ENCODE measurements at regions of chr9 and their contacts with region 1.

Region 1: DNA sequence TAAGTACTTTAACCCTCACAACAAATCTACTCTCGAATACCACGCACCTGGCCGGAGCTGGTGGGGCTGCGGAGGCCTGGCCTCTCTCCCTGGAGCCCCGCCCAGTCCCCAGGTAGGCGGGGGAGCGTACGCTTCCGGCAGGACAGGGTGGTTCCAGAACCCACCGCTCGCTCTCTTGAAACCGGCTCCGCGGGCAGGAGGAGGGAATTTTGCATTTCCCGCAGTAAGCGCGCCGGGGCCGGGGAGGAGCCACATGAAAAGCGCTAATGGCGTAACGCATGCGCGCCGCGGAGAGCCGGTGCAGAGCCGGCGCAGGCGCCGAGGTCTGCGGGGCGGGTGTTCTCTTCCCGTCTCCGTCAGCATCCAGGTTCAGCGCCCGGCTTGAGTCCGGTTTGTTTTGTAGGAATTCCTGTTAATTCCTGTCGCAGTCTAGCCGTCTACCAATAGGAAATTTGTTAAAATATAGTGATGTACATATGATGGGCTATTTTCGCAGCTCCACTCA is 20.8 kb downstream of the CAVIN4 start:
- DNase-seq: peak; percentile 94
- H3K4me3 Mint-ChIP-seq: peak overlapping the region; percentile 78
- H3K27ac Mint-ChIP-seq: peak overlapping the region; percentile 13
- H3K4me1 Mint-ChIP-seq: peaks cover 11% of the 10 kb centered on the region
- H3K27me3 Mint-ChIP-seq: peaks cover 20% of the 10 kb centered on the region

Region 2: DNA sequence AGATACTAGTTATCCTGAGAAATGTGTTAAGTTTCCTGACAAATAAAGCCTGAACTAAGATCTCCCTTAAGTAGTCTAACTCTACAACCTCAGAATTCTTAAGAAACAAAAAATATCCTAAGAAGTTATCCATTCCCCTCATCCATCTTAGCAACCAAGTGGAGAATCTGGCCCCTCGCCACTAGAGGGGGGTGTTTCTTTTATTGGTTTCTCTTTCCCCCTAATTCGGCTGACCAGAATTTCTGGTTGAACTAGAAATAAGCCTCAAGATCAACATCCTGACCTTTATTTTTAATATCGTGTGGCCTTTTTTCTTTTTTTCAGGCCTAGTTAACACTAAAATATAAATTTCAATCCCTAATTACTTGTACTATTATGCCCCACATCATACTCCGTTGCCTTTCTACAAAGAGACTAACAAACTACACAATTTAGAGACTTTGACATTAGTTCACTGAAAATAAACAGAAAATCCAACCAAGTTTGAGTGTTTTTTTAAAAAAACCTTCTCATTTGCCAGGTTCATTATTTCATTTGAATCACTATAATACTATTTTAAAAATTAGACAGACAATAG is 791.3 kb before region 1 on chr9:
- intact Hi-C with region 1: loop called (anchors 10 kb)
- DNase-seq: peak; percentile 89
- H3K4me3 Mint-ChIP-seq: no peak overlapping the region
- H3K27ac Mint-ChIP-seq: no peak overlapping the region
- H3K4me1 Mint-ChIP-seq: peaks cover 23% of the 10 kb centered on the region
- H3K27me3 Mint-ChIP-seq: peaks cover 22% of the 10 kb centered on the region

Region 3: DNA sequence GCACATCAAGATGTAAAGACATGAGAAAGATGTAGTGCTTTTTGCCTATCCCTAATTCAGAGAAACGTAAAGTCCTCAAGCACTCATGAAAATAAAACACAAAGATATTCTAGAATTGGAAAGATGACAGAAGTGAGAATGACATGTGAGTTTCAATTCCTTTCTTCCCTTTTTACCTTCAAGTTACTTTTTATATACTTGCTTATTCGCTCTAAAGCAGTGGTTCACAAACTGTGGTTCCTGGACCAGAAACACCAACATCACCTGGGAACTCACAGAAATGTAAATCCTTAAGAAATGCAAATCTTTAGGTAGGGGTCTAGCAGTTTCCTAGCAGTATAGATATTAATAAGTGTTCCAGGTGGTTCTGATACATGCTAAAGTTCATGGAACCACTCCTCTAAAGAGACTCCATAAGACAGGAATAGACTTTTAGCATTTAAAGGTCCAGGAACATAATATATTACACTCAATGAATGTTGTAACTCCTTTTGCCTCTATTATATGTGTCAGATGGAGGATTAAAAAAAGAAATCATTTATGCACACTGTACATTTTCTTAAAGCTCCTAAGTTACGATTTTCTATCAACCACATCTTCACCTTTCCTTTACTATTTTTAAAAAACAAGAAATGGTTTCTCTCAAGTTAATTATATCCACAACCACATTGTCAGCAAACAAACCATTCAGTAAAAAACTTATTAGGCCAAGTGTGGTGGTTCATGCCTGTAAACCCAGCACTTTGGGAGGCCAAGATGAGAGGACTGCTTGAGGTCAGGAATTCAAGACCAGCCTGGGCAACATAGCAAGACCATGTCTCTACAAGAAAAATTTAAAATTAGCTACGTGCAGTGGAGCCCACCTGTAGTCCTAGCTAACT is 539.8 kb before region 1 on chr9:
- intact Hi-C with region 1: no loop called
- DNase-seq: no peak
- H3K4me3 Mint-ChIP-seq: no peak overlapping the region
- H3K27ac Mint-ChIP-seq: no peak overlapping the region
- H3K4me1 Mint-ChIP-seq: peaks cover 1% of the 10 kb centered on the region
- H3K27me3 Mint-ChIP-seq: no peaks in the 10 kb centered on the region

Region 4: GRCh38 chr9:100322954-100323536 is 275.6 kb before region 1 on chr9:
- intact Hi-C with region 1: loop called (anchors 5 kb)
- DNase-seq: peak; percentile 67
- H3K4me3 Mint-ChIP-seq: no peak overlapping the region
- H3K27ac Mint-ChIP-seq: no peak overlapping the region
- H3K4me1 Mint-ChIP-seq: peaks cover 2% of the 10 kb centered on the region
- H3K27me3 Mint-ChIP-seq: no peaks in the 10 kb centered on the region

Region 5: DNA sequence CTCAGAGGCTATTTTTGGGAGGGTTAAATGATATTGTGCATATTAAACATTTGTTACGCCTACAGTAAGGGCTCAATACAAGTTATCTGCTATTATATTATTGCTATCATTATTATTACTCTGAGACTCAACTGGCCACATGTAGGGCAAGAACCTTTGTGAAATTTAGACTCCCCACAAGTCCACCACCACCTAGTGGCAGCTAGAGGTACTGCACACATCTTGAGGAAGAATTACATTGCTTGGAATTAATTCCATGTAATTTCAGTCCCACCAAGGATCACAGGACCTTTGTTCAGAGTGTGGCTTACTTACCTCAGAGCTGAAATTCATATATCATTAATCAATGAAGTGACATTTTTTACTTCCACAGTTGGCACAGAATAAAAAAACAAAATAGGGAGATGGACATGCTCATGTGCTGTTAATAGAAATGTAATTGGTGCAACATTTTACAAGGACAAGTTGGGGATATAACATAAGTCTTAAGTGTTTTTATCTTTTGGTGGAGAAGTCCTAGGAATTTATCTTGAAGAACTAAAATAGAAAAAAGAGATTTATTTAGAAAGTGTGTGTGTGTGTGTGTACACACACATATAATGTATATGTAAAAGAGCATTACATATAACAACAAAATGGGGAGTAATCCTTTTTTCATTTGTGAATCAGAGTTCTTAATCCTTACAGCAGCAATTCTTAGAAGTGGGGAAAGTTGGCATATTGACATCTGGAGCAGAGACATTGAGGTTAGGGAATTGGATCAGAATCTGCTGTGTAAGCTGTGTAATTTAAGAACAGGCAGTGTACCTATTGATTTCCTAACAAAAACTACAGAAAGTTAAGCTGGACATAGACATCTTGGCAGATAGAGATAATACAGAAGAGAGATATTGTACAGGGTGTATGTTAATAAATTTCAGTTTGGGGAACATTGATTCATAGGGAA is 160.6 kb before region 1 on chr9:
- intact Hi-C with region 1: loop called (anchors 5 kb)
- DNase-seq: peak; percentile 90
- H3K4me3 Mint-ChIP-seq: no peak overlapping the region
- H3K27ac Mint-ChIP-seq: no peak overlapping the region
- H3K4me1 Mint-ChIP-seq: peaks cover 2% of the 10 kb centered on the region
- H3K27me3 Mint-ChIP-seq: no peaks in the 10 kb centered on the region

Region 6: GRCh38 chr9:100641166-100641565 is 42.5 kb after region 1 on chr9:
- intact Hi-C with region 1: no loop called
- DNase-seq: no peak
- H3K4me3 Mint-ChIP-seq: no peak overlapping the region
- H3K27ac Mint-ChIP-seq: no peak overlapping the region
- H3K4me1 Mint-ChIP-seq: no peaks in the 10 kb centered on the region
- H3K27me3 Mint-ChIP-seq: no peaks in the 10 kb centered on the region

Region 7: GRCh38 chr9:100794738-100795269 is 196.1 kb after region 1 on chr9:
- intact Hi-C with region 1: no loop called
- DNase-seq: no peak
- H3K4me3 Mint-ChIP-seq: no peak overlapping the region
- H3K27ac Mint-ChIP-seq: no peak overlapping the region
- H3K4me1 Mint-ChIP-seq: no peaks in the 10 kb centered on the region
- H3K27me3 Mint-ChIP-seq: no peaks in the 10 kb centered on the region

Region 8: GRCh38 chr9:100856238-100856637 is 257.5 kb after region 1 on chr9:
- intact Hi-C with region 1: no loop called
- DNase-seq: no peak
- H3K4me3 Mint-ChIP-seq: no peak overlapping the region
- H3K27ac Mint-ChIP-seq: no peak overlapping the region
- H3K4me1 Mint-ChIP-seq: no peaks in the 10 kb centered on the region
- H3K27me3 Mint-ChIP-seq: no peaks in the 10 kb centered on the region

Region 9: DNA sequence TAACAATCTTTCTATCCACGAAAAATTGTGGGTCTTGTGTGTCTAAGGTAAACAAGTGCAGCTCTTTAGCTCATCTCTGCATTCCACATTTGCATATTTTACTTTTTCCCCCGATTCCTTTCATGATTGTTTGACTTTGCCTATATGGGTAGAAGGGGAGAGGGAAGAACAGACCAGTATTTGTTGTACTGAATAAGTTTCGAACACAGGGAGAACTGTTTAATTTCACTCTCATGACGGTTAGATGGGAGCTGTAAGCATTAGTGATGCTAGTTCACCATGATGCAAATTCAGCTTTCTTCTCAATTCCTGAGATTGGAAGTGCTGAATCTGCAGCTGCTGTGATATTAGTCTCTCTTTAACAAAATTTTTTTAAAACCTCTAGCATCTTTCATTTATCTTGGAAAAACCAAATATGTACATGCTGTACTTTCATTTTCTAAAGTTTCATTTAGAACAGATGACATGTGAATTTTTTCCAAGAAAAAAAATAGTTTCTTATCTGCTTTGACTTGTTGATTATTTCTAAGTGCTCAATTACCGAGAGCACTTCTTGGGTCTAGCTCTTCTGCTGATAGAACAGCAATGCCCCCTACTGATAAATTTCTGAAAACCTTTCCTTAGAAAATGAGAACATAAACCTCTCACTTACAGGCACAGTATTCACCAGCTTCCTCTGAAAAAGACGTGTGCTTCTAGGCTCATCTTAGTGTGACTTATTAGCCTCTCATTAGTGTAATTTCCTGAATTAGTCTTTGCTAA is 636.6 kb after region 1 on chr9:
- intact Hi-C with region 1: loop called (anchors 10 kb)
- DNase-seq: no peak
- H3K4me3 Mint-ChIP-seq: no peak overlapping the region
- H3K27ac Mint-ChIP-seq: no peak overlapping the region
- H3K4me1 Mint-ChIP-seq: no peaks in the 10 kb centered on the region
- H3K27me3 Mint-ChIP-seq: no peaks in the 10 kb centered on the region